ENCODE measurements at regions of chr15 and their contacts with region 1.

Region 1: DNA sequence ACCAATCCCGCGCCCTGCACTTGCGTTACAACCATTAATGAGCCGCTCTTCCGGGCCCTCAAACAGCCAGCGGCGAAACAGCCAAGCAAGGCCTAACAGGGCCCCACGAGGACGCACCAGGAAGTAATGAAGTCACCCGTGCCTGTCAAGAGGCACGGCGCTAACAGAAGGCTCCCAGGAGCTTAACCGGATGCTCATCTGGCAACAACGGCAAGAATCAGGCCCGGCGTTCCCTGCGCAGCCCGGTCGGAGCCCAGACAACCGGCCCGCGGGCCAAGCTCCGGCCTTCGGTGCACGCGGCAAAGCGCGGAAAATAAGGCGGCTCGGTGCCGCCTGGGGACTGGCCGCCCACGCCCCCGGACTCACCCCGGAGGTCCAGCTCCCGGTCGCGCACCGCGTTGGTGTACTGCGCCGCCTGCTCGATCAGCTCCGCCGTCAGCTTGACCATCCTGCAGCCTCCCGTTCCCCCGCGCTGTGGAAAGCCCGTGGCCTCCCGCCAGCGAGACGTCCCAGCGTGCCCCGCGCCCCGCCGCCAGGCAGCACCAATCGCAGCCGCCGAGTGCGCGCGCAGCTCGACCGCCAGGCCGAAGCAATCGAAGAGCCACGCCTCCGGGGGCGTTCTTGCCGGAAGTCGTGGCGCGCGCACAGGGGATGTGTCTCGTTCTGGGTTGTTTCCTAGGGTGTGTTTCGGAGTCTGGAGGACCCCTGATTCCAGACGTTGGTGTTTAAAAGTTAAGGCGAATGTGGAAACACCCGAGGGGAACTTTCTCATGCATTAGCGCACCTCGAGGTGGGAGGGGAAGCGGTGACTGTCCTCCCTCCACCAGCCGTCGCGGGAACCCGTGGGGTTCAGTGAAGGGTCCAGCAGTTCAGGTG is at the start of gene SNRPA1:
- DNase-seq: peak; percentile 95
- ATAC-seq: peak; percentile 87
- H3K4me3 Mint-ChIP-seq: peak within 1 kb of the TSS; percentile 96
- H3K27ac Mint-ChIP-seq: peak within 1 kb of the TSS; percentile 74
- H3K4me1 Mint-ChIP-seq: peaks cover 17% of the 10 kb centered on the region
- H3K27me3 Mint-ChIP-seq: no peaks in the 10 kb centered on the region; the same call in 1 of the 2 replicates
- CTCF ChIP-seq: no peak
- total RNA-seq, gene SNRPA1: 144 to 170 TPM (median 151 TPM) in 3 replicates

Region 2: DNA sequence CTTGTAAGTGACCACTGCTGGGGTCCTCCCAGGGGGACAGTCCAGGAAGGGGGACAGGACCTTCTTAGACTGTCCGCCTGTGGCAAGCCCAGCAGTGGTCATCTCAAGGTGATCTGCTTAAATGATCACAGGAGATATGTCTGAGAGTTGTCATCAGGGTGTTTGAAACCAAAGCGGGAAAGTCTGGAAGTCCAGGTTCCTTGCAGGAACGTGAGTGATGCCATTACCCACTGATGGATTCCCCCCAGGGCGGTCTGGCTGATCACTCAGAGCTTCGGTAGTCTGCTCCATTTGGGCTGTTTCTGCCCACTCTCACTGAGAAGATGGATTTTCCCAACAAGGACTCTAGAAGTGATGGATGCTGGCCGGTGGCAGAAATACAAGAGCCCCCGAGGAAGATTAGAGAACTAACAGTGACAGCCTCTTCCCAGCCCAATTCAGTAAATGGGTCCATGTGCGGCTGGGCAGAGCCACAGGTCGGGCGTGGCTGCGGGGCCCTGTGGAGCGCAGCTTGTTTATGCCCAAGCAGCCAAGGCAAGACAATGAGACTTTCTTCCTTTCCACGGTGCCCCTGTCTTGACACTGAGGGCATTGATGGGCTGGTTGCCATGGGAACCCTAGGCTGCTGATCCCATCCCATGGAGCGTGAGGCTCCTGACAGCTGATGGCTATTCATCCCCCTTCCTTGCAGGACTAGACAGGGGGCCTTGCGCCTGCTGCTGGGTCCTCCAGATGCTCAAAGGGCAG is 185.1 kb after region 1 on chr15:
- CTCF ChIA-PET with region 1: no interaction called
- POLR2A ChIA-PET with region 1: no interaction called
- DNase-seq: no peak
- ATAC-seq: no peak
- H3K4me3 Mint-ChIP-seq: no peak overlapping the region
- H3K27ac Mint-ChIP-seq: no peak overlapping the region
- H3K4me1 Mint-ChIP-seq: peaks cover 11% of the 10 kb centered on the region
- H3K27me3 Mint-ChIP-seq: no peaks in the 10 kb centered on the region
- CTCF ChIP-seq: no peak

Region 3: GRCh38 chr15:101501703-101502373 is 206.9 kb after region 1 on chr15:
- CTCF ChIA-PET with region 1: interaction called, 10 read pairs
- POLR2A ChIA-PET with region 1: no interaction called
- DNase-seq: peak; percentile 66
- ATAC-seq: peak; percentile 91
- H3K4me3 Mint-ChIP-seq: no peak overlapping the region
- H3K27ac Mint-ChIP-seq: no peak overlapping the region
- H3K4me1 Mint-ChIP-seq: peaks cover 13% of the 10 kb centered on the region
- H3K27me3 Mint-ChIP-seq: no peaks in the 10 kb centered on the region; the same call in 1 of the 2 replicates
- CTCF ChIP-seq: 0 out of 2 replicates have a peak, but pooled peaks have one; percentile 27

Region 4: DNA sequence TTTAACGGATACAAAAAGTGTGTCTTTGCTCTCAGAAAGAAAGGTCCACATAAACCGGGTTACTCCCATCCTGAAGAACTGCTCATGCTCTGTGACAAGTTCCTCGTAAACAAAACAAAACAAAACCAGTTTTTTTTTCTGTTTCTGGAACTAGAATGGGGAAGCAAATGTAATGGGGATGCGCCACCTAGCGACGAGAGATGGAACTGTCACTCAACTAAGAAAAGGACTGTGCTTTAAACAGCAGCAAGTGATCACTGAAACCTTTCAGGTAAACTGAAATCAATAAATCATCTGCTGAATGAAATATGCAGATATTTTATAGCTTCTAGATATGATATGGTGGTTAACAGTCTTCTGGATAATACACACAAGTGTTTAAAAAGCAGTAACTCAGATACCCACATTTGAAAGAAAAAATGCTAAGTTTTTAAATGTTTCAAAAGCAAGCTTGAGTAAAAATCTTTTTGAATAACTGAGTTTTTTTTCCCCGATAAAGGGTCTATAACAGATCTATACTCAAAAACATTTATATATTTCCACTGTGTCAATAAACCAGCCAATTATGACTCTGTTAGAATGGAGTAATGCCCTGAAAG is 346.3 kb after region 1 on chr15:
- CTCF ChIA-PET with region 1: interaction called, 13 read pairs
- POLR2A ChIA-PET with region 1: no interaction called
- DNase-seq: peak; percentile 76
- ATAC-seq: peak; percentile 42
- H3K4me3 Mint-ChIP-seq: no peak overlapping the region
- H3K27ac Mint-ChIP-seq: peak overlapping the region; percentile 74; the same call in 1 of the 2 replicates
- H3K4me1 Mint-ChIP-seq: peaks cover 23% of the 10 kb centered on the region
- H3K27me3 Mint-ChIP-seq: no peaks in the 10 kb centered on the region
- CTCF ChIP-seq: peak; percentile 92